Naive thymus-derived CD4-positive, alpha-beta T cell (primary cell): ENCODE measurements at regions of chr22 and their contacts with region 1.

Region 1: GRCh38 chr22:38705235-38706100 is at the start of gene GTPBP1:
- DNase-seq: peak; percentile 76 to 100 (median 99)
- ATAC-seq: peak; percentile 85
- H3K4me3 ChIP-seq: peak within 1 kb of the TSS; percentile 80
- H3K4me3 Mint-ChIP-seq: peak within 1 kb of the TSS; percentile 71 to 98 (median 93)
- H3K27ac ChIP-seq: peak within 1 kb of the TSS; percentile 90
- H3K27ac Mint-ChIP-seq: peak within 1 kb of the TSS; percentile 80 to 99 (median 98)
- H3K4me1 ChIP-seq: peaks cover 36 to 42% of the 10 kb centered on the region in 2 donors
- H3K4me1 Mint-ChIP-seq: peaks cover 36 to 60% (median 59%) of the 10 kb centered on the region in 7 donors
- H3K27me3 ChIP-seq: no peaks in the 10 kb centered on the region
- H3K27me3 Mint-ChIP-seq: no peaks in the 10 kb centered on the region
- total RNA-seq, gene GTPBP1: 79.1 to 209 (median 91.9) TPM

Region 2: GRCh38 chr22:38201710-38202436 is 503.6 kb before region 1 on chr22 and contains the start of gene MAFF:
- CTCF ChIA-PET with region 1: no interaction called
- POLR2A ChIA-PET with region 1: no interaction called
- intact Hi-C with region 1: loop called in 1 of 2 experiments (anchors 5 kb)
- DNase-seq: peak; percentile 62 to 88 (median 72)
- ATAC-seq: peak; percentile 87
- H3K4me3 ChIP-seq: peak within 1 kb of the TSS; percentile 77
- H3K4me3 Mint-ChIP-seq: peak within 1 kb of the TSS; percentile 80 to 93 (median 88)
- H3K27ac ChIP-seq: peak within 1 kb of the TSS; percentile 88
- H3K27ac Mint-ChIP-seq: peak within 1 kb of the TSS; percentile 84 to 97 (median 89)
- H3K4me1 ChIP-seq: peaks cover 5 to 25% of the 10 kb centered on the region in 2 donors
- H3K4me1 Mint-ChIP-seq: peaks cover 10 to 33% (median 26%) of the 10 kb centered on the region in 7 donors
- H3K27me3 ChIP-seq: no peaks in the 10 kb centered on the region
- H3K27me3 Mint-ChIP-seq: no peaks in the 10 kb centered on the region
- total RNA-seq, gene MAFF: 4.8 to 72.6 (median 5.5) TPM

Region 3: DNA sequence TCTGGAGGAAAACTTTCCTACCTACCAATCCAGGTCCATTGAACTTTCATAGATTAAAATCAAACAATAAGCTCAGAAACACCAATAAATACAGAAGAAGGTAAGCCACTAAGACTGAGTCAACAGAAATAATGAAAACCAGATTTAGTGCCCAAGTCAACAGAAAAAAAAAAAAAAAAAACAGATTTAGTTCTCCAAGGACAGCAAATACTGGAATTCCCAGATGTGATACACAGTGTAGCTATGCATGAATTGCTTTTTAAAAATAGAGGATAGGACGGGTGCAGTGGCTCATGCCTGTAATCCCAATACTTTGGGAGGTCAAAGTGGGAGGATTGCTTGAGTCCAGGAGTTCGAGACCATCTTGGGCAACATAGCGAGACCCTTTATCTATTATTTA is 151.2 kb before region 1 on chr22:
- CTCF ChIA-PET with region 1: no interaction called
- POLR2A ChIA-PET with region 1: no interaction called
- intact Hi-C with region 1: no loop called
- DNase-seq: no peak
- ATAC-seq: no peak
- H3K4me3 ChIP-seq: no peak overlapping the region
- H3K4me3 Mint-ChIP-seq: no peak overlapping the region
- H3K27ac ChIP-seq: no peak overlapping the region
- H3K27ac Mint-ChIP-seq: no peak overlapping the region
- H3K4me1 ChIP-seq: no peaks in the 10 kb centered on the region
- H3K4me1 Mint-ChIP-seq: no peaks in the 10 kb centered on the region
- H3K27me3 ChIP-seq: no peaks in the 10 kb centered on the region
- H3K27me3 Mint-ChIP-seq: no peaks in the 10 kb centered on the region

Region 4: GRCh38 chr22:38569972-38570778 is 135.3 kb before region 1 on chr22 and contains the start of gene DMC1:
- CTCF ChIA-PET with region 1: no interaction called
- POLR2A ChIA-PET with region 1: no interaction called
- intact Hi-C with region 1: loop called (anchors 1 kb)
- DNase-seq: peak; percentile 77 to 96 (median 89)
- ATAC-seq: peak; percentile 99
- H3K4me3 ChIP-seq: peak within 1 kb of the TSS; percentile 88
- H3K4me3 Mint-ChIP-seq: peak within 1 kb of the TSS; percentile 89 to 94 (median 92)
- H3K27ac ChIP-seq: peak within 1 kb of the TSS; percentile 87
- H3K27ac Mint-ChIP-seq: peak within 1 kb of the TSS; percentile 75 to 94 (median 91)
- H3K4me1 ChIP-seq: peaks cover 7 to 8% of the 10 kb centered on the region in 2 donors
- H3K4me1 Mint-ChIP-seq: peaks cover 7 to 21% (median 17%) of the 10 kb centered on the region in 7 donors
- H3K27me3 ChIP-seq: no peaks in the 10 kb centered on the region
- H3K27me3 Mint-ChIP-seq: peaks cover 0 to 7% (median 0%) of the 10 kb centered on the region in 5 donors
- total RNA-seq, gene DMC1: 0.32 to 7.4 (median 0.65) TPM in 4 of 5 experiments, not detected in the other

Region 5: GRCh38 chr22:38733329-38733723 is 27.9 kb after region 1 on chr22:
- CTCF ChIA-PET with region 1: interaction called, 3 read pairs
- POLR2A ChIA-PET with region 1: interaction called, 31 read pairs
- intact Hi-C with region 1: no loop called
- DNase-seq: peak in 5 of 9 donors; percentile 37 to 55 (median 49)
- ATAC-seq: peak; percentile 67
- H3K4me3 ChIP-seq: no peak overlapping the region
- H3K4me3 Mint-ChIP-seq: peak overlapping the region in 4 of 10 donors; percentile 11 to 51 (median 40)
- H3K27ac ChIP-seq: peak overlapping the region; percentile 54
- H3K27ac Mint-ChIP-seq: peak overlapping the region; percentile 76 to 91 (median 87)
- H3K4me1 ChIP-seq: peaks cover 15 to 18% of the 10 kb centered on the region in 2 donors
- H3K4me1 Mint-ChIP-seq: peaks cover 25 to 63% (median 53%) of the 10 kb centered on the region in 7 donors
- H3K27me3 ChIP-seq: no peaks in the 10 kb centered on the region
- H3K27me3 Mint-ChIP-seq: no peaks in the 10 kb centered on the region

Region 6: GRCh38 chr22:38872172-38872830 is 166.8 kb after region 1 on chr22 and contains the start of gene CBX6:
- CTCF ChIA-PET with region 1: no interaction called
- POLR2A ChIA-PET with region 1: interaction called, 3 read pairs
- intact Hi-C with region 1: loop called in 1 of 2 experiments (anchors 2 kb)
- DNase-seq: peak; percentile 90 to 98 (median 95)
- ATAC-seq: peak; percentile 89
- H3K4me3 ChIP-seq: peak within 1 kb of the TSS; percentile 98
- H3K4me3 Mint-ChIP-seq: peak within 1 kb of the TSS; percentile 88 to 97 (median 93)
- H3K27ac ChIP-seq: peak within 1 kb of the TSS; percentile 73
- H3K27ac Mint-ChIP-seq: peak within 1 kb of the TSS; percentile 81 to 93 (median 89)
- H3K4me1 ChIP-seq: peaks cover 28 to 34% of the 10 kb centered on the region in 2 donors
- H3K4me1 Mint-ChIP-seq: peaks cover 35 to 55% (median 49%) of the 10 kb centered on the region in 7 donors
- H3K27me3 ChIP-seq: no peaks in the 10 kb centered on the region
- H3K27me3 Mint-ChIP-seq: peaks cover 0 to 18% (median 0%) of the 10 kb centered on the region in 5 donors
- total RNA-seq, gene CBX6: 41.7 to 77.0 (median 73.4) TPM

Region 7: DNA sequence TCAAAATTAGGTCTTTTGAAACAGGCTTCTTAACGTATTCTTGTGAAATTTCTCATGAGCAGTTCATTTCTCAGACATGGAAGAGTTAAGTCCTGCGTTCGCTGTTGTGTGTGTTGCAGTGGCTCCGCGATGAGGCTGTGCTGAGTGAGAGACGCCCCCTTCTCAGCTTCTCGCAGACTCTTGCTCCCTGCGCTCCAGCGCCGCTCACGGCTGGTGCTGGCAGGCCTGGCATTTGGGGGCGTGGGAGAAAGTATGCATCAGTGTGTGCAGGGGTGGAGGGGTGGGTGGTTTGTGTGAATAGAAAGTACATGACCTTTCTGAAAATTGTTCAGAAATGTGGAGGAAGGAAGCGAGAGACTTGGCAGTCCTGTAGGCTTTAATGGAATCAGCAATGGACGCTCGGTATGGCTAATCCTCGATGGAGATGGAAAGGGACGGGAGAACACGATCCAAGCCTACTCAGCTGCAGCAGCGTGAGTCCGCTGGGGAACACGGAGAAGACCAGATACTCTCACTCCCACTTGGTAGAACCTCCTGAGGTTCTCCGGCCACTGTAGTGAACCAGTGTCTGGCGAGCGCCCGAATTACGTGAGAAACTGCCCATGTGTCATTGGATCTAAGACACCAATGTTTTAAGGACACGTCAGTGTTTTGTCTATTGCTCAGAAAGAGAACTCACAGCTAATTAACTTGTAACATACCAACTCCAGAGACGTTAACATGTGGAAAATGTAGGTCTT is 700.0 kb after region 1 on chr22:
- CTCF ChIA-PET with region 1: no interaction called
- POLR2A ChIA-PET with region 1: no interaction called
- intact Hi-C with region 1: loop called in 1 of 2 experiments (anchors 5 kb)
- DNase-seq: peak in 1 of 9 donors; percentile 34
- ATAC-seq: peak; percentile 48
- H3K4me3 ChIP-seq: no peak overlapping the region
- H3K4me3 Mint-ChIP-seq: peak overlapping the region in 4 of 10 donors; percentile 9 to 55 (median 36)
- H3K27ac ChIP-seq: no peak overlapping the region
- H3K27ac Mint-ChIP-seq: peak overlapping the region in 4 of 9 donors; percentile 6 to 24 (median 10)
- H3K4me1 ChIP-seq: peaks cover under 1 to 13% of the 10 kb centered on the region in 2 donors
- H3K4me1 Mint-ChIP-seq: peaks cover 44 to 89% (median 76%) of the 10 kb centered on the region in 7 donors
- H3K27me3 ChIP-seq: no peaks in the 10 kb centered on the region
- H3K27me3 Mint-ChIP-seq: no peaks in the 10 kb centered on the region